CD8-positive, alpha-beta memory T cell (primary cell): ENCODE measurements at regions of chr1 and their contacts with region 1.

Region 1: DNA sequence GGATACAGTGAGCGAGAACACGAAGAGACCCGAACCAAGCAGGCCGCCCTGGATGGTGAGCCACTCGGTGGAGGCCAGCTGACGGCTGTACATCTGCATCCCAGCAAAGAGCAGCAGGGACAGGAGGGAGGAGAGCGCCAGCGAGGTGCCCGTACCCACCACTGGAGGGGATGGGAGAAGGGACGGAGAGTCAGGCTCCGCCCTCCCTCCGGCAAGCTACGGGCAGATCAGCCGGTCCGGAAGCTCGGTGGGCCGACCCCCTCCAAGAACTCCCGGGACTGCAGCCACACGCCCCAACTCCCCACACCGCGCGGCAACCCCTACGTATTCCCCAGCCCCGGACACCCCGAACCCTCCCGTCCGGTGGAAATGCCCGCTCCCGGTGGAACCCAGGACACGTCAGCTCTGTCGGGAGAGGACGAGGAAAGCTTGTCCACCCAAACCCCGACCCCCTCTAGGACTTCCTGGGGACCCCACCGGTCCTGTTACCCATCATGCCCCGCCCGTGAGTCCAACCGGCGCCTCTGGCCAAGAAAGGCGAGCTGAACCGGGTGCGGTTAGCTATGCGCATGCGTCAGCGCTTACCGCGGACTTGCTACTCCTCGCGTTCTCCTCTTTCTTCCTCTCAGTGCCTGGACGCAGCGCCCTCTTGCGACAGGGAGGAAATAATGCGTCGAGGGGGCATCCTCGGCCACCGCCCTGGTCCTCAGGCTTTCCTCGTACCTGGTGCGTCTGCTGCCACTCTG is at the start of gene KRTCAP2:
- DNase-seq: peak; percentile 91 to 97 (median 92)
- H3K4me3 ChIP-seq: peak within 1 kb of the TSS; percentile 97
- H3K4me3 Mint-ChIP-seq: peak within 1 kb of the TSS; percentile 86 to 100 (median 98)
- H3K27ac ChIP-seq: peak within 1 kb of the TSS; percentile 94
- H3K27ac Mint-ChIP-seq: peak within 1 kb of the TSS; percentile 79 to 100 (median 98)
- H3K4me1 ChIP-seq: peaks cover 41% of the 10 kb centered on the region
- H3K4me1 Mint-ChIP-seq: peaks cover 28 to 64% (median 40%) of the 10 kb centered on the region in 3 donors
- H3K27me3 ChIP-seq: no peaks in the 10 kb centered on the region
- H3K27me3 Mint-ChIP-seq: peaks cover 0 to 2% of the 10 kb centered on the region in 2 donors
- total RNA-seq, gene KRTCAP2: 181 to 207 TPM

Region 2: GRCh38 chr1:155044812-155045690 is 127.9 kb before region 1 on chr1:
- CTCF ChIA-PET with region 1: interaction called, 11 read pairs
- POLR2A ChIA-PET with region 1: no interaction called
- DNase-seq: peak; percentile 34 to 75 (median 57)
- H3K4me3 ChIP-seq: no peak overlapping the region
- H3K4me3 Mint-ChIP-seq: peak overlapping the region in 1 of 7 donors; percentile 49
- H3K27ac ChIP-seq: no peak overlapping the region
- H3K27ac Mint-ChIP-seq: no peak overlapping the region
- H3K4me1 ChIP-seq: peaks cover under 1% of the 10 kb centered on the region
- H3K4me1 Mint-ChIP-seq: peaks cover 5 to 11% (median 6%) of the 10 kb centered on the region in 3 donors
- H3K27me3 ChIP-seq: no peaks in the 10 kb centered on the region
- H3K27me3 Mint-ChIP-seq: peaks cover 3 to 4% of the 10 kb centered on the region in 2 donors

Region 3: DNA sequence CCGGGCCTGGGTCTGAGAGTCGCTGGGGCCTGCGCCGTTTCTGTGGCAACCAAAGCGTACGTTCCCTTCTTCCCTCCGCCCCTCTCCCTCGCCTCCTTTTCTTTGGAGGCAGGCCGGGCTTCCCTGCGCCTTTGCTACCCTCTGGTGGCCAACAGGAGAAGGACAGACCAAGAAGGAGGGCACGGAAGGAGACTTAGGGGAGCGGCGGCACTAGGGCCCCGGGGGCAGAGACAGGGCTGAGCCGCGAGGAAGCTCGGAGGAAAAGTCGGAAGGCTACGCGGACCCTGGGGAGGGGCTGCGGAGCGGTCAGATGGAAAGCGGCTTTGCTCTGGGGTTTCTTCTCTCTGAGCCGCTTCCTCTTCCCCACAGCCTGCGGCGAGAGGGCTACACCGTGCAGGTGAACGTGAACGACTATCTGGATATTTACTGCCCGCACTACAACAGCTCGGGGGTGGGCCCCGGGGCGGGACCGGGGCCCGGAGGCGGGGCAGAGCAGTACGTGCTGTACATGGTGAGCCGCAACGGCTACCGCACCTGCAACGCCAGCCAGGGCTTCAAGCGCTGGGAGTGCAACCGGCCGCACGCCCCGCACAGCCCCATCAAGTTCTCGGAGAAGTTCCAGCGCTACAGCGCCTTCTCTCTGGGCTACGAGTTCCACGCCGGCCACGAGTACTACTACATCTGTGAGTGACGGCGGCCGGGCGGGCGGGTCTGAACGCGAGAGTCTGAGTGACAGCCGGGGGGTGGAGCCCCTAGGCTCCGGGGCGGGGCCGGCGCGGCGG is 88.0 kb before region 1 on chr1:
- CTCF ChIA-PET with region 1: interaction called, 177 read pairs
- POLR2A ChIA-PET with region 1: interaction called, 4 read pairs
- DNase-seq: peak; percentile 86 to 95 (median 90)
- H3K4me3 ChIP-seq: peak overlapping the region; percentile 99
- H3K4me3 Mint-ChIP-seq: peak overlapping the region; percentile 86 to 98 (median 92)
- H3K27ac ChIP-seq: peak overlapping the region; percentile 71
- H3K27ac Mint-ChIP-seq: peak overlapping the region; percentile 80 to 97 (median 94)
- H3K4me1 ChIP-seq: peaks cover 57% of the 10 kb centered on the region
- H3K4me1 Mint-ChIP-seq: peaks cover 33 to 51% (median 36%) of the 10 kb centered on the region in 3 donors
- H3K27me3 ChIP-seq: peaks cover 40% of the 10 kb centered on the region
- H3K27me3 Mint-ChIP-seq: peaks cover 34 to 36% of the 10 kb centered on the region in 2 donors

Region 4: GRCh38 chr1:155135415-155136028 is 37.4 kb before region 1 on chr1 and contains the start of gene SLC50A1:
- CTCF ChIA-PET with region 1: interaction called, 11 read pairs
- POLR2A ChIA-PET with region 1: interaction called, 5 read pairs
- DNase-seq: peak; percentile 90 to 93 (median 91)
- H3K4me3 ChIP-seq: peak within 1 kb of the TSS; percentile 99
- H3K4me3 Mint-ChIP-seq: peak within 1 kb of the TSS; percentile 94 to 100 (median 97)
- H3K27ac ChIP-seq: peak within 1 kb of the TSS; percentile 93
- H3K27ac Mint-ChIP-seq: peak within 1 kb of the TSS; percentile 94 to 100 (median 99)
- H3K4me1 ChIP-seq: peaks cover 23% of the 10 kb centered on the region
- H3K4me1 Mint-ChIP-seq: peaks cover 39 to 52% (median 52%) of the 10 kb centered on the region in 3 donors
- H3K27me3 ChIP-seq: no peaks in the 10 kb centered on the region
- H3K27me3 Mint-ChIP-seq: peaks cover 5 to 6% of the 10 kb centered on the region in 2 donors
- total RNA-seq, gene SLC50A1: 43.4 to 47.2 TPM

Region 5: DNA sequence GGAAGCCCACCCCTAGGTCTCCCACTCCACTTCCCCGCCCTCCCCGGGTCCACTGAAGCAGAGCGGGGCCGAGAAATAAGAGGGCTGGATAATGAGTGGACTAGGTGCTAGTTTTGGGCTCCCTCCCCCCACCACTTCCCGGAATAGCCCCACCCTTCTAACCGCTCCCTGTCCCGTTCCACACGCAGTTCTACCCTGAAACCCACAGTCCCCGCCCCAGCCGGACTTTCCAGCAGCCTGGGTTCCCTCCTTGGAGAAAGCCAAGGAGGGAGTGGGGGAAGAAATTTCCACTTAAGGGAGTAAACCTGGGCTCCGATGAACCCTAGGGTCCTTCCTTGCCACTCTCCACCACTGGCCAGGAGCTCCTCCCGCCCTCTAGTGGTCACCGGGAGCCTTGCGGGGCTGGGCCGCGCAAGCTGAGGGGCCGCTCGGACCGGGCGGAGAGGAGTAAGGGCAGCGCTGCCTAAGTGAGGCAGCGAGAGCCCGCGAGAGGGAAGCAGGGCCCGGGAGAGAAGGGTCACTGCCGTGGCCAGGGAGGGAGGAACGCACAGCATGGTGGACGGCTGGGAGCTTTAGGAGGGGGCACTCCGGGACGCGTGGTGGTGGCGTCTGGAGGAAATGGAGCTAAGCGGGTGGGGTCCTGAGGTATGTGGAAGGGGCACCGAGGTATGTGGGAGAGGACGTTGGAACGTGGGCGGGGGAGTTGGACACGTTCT is 20.5 kb after region 1 on chr1:
- CTCF ChIA-PET with region 1: interaction called, 84 read pairs
- POLR2A ChIA-PET with region 1: interaction called, 16 read pairs
- DNase-seq: peak; percentile 55 to 78 (median 58)
- H3K4me3 ChIP-seq: peak overlapping the region; percentile 78
- H3K4me3 Mint-ChIP-seq: peak overlapping the region; percentile 83 to 95 (median 89)
- H3K27ac ChIP-seq: peak overlapping the region; percentile 89
- H3K27ac Mint-ChIP-seq: peak overlapping the region; percentile 94 to 100 (median 98)
- H3K4me1 ChIP-seq: peaks cover 24% of the 10 kb centered on the region
- H3K4me1 Mint-ChIP-seq: peaks cover 25 to 39% (median 26%) of the 10 kb centered on the region in 3 donors
- H3K27me3 ChIP-seq: no peaks in the 10 kb centered on the region
- H3K27me3 Mint-ChIP-seq: no peaks in the 10 kb centered on the region

Region 6: DNA sequence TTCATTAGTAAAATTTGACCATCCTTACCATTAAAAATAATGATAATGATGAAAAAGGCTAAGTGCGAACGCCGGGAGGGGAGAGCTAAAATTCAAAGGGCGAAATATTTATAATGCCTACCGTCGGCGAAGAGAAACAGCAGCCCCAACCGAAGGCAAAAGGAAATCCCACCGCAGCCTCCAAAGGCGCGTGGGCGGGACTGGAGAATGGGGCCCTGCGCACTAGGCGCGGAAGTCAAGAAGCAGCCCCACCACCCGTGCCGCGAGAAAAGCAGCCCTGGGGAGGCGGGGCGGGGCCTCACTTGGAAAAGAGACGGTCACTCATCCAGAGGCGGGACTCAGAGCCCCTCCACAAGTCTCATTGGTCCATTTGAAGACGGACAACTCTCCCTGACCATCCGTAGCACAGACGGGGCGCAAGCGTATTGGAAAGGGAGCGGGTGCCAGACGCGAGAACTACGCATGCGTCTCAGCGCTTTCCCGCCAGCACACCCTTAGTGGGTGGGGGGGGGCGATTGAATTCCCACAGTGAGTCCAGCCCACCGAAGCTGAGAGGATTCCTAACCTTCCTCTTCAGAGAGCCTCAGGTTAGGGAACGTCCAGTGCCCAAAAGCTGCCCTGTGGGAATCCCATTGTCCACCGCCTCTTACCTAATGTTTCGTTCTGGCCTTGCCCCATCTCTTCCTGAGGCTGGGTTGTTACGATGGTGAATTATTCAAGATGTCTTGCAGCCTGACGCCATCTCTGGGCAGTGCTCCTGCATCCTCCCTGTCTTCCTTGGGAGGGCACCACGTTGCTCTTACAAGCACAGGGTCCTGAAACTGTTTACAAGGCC is 54.6 kb after region 1 on chr1:
- CTCF ChIA-PET with region 1: interaction called, 17 read pairs
- POLR2A ChIA-PET with region 1: no interaction called
- DNase-seq: peak; percentile 97 to 99 (median 98)
- H3K4me3 ChIP-seq: peak overlapping the region; percentile 93
- H3K4me3 Mint-ChIP-seq: peak overlapping the region; percentile 70 to 96 (median 87)
- H3K27ac ChIP-seq: peak overlapping the region; percentile 89
- H3K27ac Mint-ChIP-seq: peak overlapping the region; percentile 82 to 96 (median 94)
- H3K4me1 ChIP-seq: peaks cover 17% of the 10 kb centered on the region
- H3K4me1 Mint-ChIP-seq: peaks cover 23 to 24% (median 24%) of the 10 kb centered on the region in 3 donors
- H3K27me3 ChIP-seq: no peaks in the 10 kb centered on the region
- H3K27me3 Mint-ChIP-seq: peaks cover 0 to 2% of the 10 kb centered on the region in 2 donors